ENCODE measurements at regions of chr17 and their contacts with region 1.

Region 1: GRCh38 chr17:64608540-64608981 is 53.5 kb downstream of the SMURF2 start:
- DNase-seq: no peak
- H3K4me3 Mint-ChIP-seq: peak overlapping the region; percentile 30
- H3K27ac Mint-ChIP-seq: peak overlapping the region; percentile 82
- H3K4me1 Mint-ChIP-seq: peaks cover 40% of the 10 kb centered on the region
- H3K27me3 Mint-ChIP-seq: no peaks in the 10 kb centered on the region

Region 2: GRCh38 chr17:64572638-64573154 is 35.9 kb before region 1 on chr17:
- CTCF ChIA-PET with region 1: no interaction called
- intact Hi-C with region 1: loop called (anchors 2 kb)
- DNase-seq: peak; percentile 7
- H3K4me3 Mint-ChIP-seq: no peak overlapping the region
- H3K27ac Mint-ChIP-seq: peak overlapping the region; percentile 70
- H3K4me1 Mint-ChIP-seq: peaks cover 14% of the 10 kb centered on the region
- H3K27me3 Mint-ChIP-seq: no peaks in the 10 kb centered on the region

Region 3: DNA sequence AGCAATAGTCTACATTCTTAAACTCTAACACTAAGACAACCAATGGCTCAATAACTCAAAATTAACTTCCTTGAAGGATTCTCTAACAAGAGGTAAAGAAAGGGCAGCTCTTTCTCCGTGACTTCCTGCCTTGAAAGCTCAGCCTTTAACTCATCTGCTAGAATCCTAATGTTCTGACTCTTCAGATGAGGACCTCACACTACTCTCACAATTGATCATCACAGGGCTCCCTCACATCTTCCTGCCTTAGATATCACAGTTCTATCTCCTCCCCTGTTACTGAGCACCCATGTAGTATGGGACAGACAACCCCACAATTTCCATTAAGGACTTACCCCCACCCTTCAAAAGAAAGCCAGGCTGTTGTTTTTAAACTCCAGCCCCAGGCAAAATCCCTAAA is 20.1 kb after region 1 on chr17:
- CTCF ChIA-PET with region 1: interaction called, 5 read pairs
- intact Hi-C with region 1: loop called (anchors 1 kb)
- DNase-seq: peak; percentile 61
- H3K4me3 Mint-ChIP-seq: peak overlapping the region; percentile 8
- H3K27ac Mint-ChIP-seq: no peak overlapping the region
- H3K4me1 Mint-ChIP-seq: peaks cover 52% of the 10 kb centered on the region
- H3K27me3 Mint-ChIP-seq: no peaks in the 10 kb centered on the region

Region 4: DNA sequence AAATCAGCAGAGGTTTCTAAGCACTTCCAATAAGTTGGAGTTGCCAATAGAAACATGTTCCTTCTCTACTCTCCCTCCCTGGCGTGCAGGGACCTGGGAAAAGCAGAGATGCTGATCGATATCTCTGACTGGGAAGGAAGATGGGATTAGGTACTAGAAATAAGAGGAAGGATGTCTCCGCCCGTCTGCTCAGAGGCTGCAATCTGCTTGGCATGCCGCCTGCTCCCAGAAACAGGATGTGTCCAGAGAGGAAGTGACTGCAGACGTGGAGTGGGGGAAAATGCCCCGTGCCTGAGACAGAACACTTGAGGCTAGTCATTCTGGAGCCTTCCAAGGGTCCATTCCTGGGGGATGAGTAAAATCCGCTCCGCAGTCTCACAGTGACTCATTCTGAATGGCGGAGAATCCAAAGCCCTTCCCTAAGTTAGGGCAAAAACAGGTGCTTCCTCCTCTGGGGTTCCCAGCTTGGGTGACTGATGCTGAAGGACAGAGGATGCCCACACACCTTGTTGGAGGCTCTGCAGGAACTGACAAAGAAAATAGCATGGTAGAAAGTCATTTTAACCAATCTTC is 98.5 kb after region 1 on chr17:
- CTCF ChIA-PET with region 1: no interaction called
- intact Hi-C with region 1: no loop called
- DNase-seq: no peak
- H3K4me3 Mint-ChIP-seq: no peak overlapping the region
- H3K27ac Mint-ChIP-seq: no peak overlapping the region
- H3K4me1 Mint-ChIP-seq: peaks cover 39% of the 10 kb centered on the region
- H3K27me3 Mint-ChIP-seq: no peaks in the 10 kb centered on the region

Region 5: DNA sequence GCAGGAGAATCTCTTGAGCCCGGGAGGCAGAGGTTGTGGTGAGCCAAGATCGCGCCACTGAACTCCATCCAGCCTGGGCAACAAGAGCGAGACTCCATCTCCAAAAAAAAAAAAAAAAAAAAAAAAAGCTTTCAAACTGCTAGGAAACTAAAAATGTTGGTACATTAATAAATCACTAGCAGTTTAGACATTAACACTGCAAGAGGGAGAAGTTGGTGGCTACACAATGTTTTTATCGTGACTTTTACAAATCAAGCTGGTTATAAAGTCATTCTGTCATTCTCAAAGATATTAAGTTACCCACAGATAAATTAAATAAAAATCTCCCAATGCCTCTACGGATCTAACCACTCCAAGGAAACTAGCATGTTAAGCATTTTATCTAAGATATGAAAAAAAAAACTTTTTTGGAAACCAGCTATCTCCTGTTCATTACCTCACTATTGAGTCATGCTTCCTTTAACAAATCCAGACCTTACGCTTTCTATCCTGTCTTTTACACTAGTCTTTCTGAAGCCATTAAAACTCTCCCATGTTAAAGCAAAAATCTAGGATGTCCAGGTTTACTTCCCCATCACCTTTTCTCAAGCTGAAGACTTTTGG is 139.5 kb after region 1 on chr17:
- CTCF ChIA-PET with region 1: no interaction called
- intact Hi-C with region 1: no loop called
- DNase-seq: no peak
- H3K4me3 Mint-ChIP-seq: no peak overlapping the region
- H3K27ac Mint-ChIP-seq: no peak overlapping the region
- H3K4me1 Mint-ChIP-seq: no peaks in the 10 kb centered on the region
- H3K27me3 Mint-ChIP-seq: no peaks in the 10 kb centered on the region